ENCODE measurements at regions of chr1 and their contacts with region 1.

Region 1: DNA sequence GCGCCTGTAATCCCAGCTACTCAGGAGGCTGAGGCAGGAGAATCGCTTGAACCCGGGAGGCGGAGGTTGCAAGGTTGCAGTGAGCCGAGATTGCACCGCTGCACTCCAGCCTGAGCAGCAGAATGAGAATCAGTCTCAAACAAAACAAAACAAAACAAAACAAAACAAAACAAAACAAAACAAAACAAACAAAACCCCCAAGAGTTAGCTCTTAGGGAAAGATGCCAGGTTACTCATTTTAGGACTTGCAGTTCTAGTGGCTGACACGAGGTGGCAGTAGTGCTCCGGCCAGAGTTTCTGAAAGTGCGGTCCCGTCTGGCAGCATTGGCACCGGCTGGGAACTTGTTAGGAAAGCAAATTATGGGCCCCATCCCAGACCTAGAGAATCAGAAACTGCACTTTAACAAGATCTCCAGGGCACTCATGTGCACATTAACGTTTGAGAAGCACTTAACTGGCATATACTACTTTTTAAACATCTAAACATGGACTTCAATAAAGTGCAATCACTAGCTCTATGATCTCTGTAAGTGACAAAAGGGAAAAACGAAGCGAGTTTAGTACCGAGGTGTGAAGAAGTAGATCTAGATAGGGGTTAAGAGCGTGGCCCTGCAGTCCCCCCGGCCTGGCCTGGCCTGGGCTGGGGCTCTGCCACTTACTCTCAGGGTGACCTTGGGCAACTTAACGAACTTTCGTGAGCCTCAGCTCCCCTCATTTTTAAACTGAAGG is 41.9 kb upstream of the TNFRSF1B start:
- DNase-seq: peak; percentile 41 to 91
- H3K4me3 ChIP-seq: no peak overlapping the region
- H3K27ac ChIP-seq: no peak overlapping the region
- H3K4me1 ChIP-seq: no peaks in the 10 kb centered on the region
- H3K27me3 ChIP-seq: no peaks in the 10 kb centered on the region
- CTCF ChIP-seq: peak; percentile 78 to 97 (median 89)
- EP300 ChIP-seq: no peak
- POLR2A ChIP-seq: no peak
- RAD21 ChIP-seq: peak; percentile 96 to 97

Region 2: DNA sequence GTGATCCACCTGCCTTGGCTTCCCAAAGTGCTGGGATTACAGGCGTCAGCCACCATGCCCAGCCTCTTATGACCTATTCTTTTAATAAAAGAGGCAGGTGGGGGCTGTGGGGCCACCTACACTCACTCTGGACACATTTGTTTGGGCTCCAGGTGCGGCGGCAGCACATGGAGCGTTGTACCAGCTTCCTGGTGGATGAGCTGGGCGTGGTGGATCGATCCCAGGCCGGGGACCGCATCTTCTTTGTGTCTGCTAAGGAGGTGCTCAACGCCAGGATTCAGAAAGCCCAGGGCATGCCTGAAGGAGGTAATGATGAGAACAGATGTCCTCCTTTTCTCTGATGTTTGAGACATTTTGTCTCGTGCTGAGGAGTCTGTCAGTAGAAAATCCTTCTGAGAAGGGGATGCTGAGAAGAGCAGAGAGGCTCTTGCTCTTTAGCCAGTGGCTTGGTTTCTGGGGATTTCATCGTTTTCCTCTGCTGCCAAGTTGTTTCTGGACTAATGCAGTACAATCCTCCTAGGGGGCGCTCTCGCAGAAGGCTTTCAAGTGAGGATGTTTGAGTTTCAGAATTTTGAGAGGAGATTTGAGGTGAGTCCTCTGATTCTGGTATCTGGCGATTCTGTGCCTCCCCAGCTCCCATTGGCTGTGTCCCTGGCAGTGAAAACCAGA is 123.5 kb before region 1 on chr1:
- CTCF ChIA-PET with region 1: no interaction called
- POLR2A ChIA-PET with region 1: no interaction called
- DNase-seq: peak in 1 of 2 experiments; percentile 83
- H3K4me3 ChIP-seq: no peak overlapping the region
- H3K27ac ChIP-seq: no peak overlapping the region
- H3K4me1 ChIP-seq: no peaks in the 10 kb centered on the region
- H3K27me3 ChIP-seq: no peaks in the 10 kb centered on the region
- CTCF ChIP-seq: peak; percentile 30 to 79 (median 74)
- EP300 ChIP-seq: no peak
- POLR2A ChIP-seq: no peak
- RAD21 ChIP-seq: peak; percentile 51 to 64

Region 3: GRCh38 chr1:12113433-12114339 is 11.2 kb before region 1 on chr1:
- CTCF ChIA-PET with region 1: interaction called, 61 read pairs
- POLR2A ChIA-PET with region 1: no interaction called
- DNase-seq: no peak
- H3K4me3 ChIP-seq: no peak overlapping the region
- H3K27ac ChIP-seq: no peak overlapping the region
- H3K4me1 ChIP-seq: no peaks in the 10 kb centered on the region
- H3K27me3 ChIP-seq: no peaks in the 10 kb centered on the region
- CTCF ChIP-seq: no peak
- EP300 ChIP-seq: no peak
- POLR2A ChIP-seq: no peak
- RAD21 ChIP-seq: no peak

Region 4: GRCh38 chr1:12153181-12153785 is 28.4 kb after region 1 on chr1:
- CTCF ChIA-PET with region 1: interaction called, 79 read pairs
- POLR2A ChIA-PET with region 1: no interaction called
- DNase-seq: no peak
- H3K4me3 ChIP-seq: no peak overlapping the region
- H3K27ac ChIP-seq: no peak overlapping the region
- H3K4me1 ChIP-seq: 0 out of 7 replicates have a peak, but pooled peaks cover 0 to 2% (median 0%) of the 10 kb centered on the region in 4 experiments
- H3K27me3 ChIP-seq: peaks cover 0 to 2% (median 0%) of the 10 kb centered on the region in 4 experiments; a peak in 1 of 7 replicates
- CTCF ChIP-seq: no peak
- EP300 ChIP-seq: no peak
- POLR2A ChIP-seq: no peak
- RAD21 ChIP-seq: no peak

Region 5: GRCh38 chr1:12177999-12178441 is 53.2 kb after region 1 on chr1:
- CTCF ChIA-PET with region 1: interaction called, 61 read pairs
- POLR2A ChIA-PET with region 1: no interaction called
- DNase-seq: no peak
- H3K4me3 ChIP-seq: no peak overlapping the region
- H3K27ac ChIP-seq: no peak overlapping the region
- H3K4me1 ChIP-seq: peaks cover 0 to 19% (median 2%) of the 10 kb centered on the region in 4 experiments; a peak in 3 of 7 replicates
- H3K27me3 ChIP-seq: no peaks in the 10 kb centered on the region
- CTCF ChIP-seq: no peak
- EP300 ChIP-seq: no peak
- POLR2A ChIP-seq: no peak
- RAD21 ChIP-seq: no peak

Region 6: GRCh38 chr1:12215118-12215961 is 90.5 kb after region 1 on chr1:
- CTCF ChIA-PET with region 1: interaction called, 503 read pairs
- POLR2A ChIA-PET with region 1: no interaction called
- DNase-seq: no peak
- H3K4me3 ChIP-seq: no peak overlapping the region
- H3K27ac ChIP-seq: no peak overlapping the region
- H3K4me1 ChIP-seq: no peaks in the 10 kb centered on the region
- H3K27me3 ChIP-seq: no peaks in the 10 kb centered on the region; a peak in 1 of 7 replicates
- CTCF ChIP-seq: no peak
- EP300 ChIP-seq: no peak
- POLR2A ChIP-seq: no peak
- RAD21 ChIP-seq: no peak

Region 7: GRCh38 chr1:12275369-12275768 is 150.5 kb after region 1 on chr1:
- CTCF ChIA-PET with region 1: interaction called, 58 read pairs
- POLR2A ChIA-PET with region 1: no interaction called
- DNase-seq: peak; percentile 5 to 75
- H3K4me3 ChIP-seq: no peak overlapping the region
- H3K27ac ChIP-seq: no peak overlapping the region
- H3K4me1 ChIP-seq: peaks cover 0 to 5% (median 0%) of the 10 kb centered on the region in 4 experiments; a peak in 1 of 7 replicates
- H3K27me3 ChIP-seq: no peaks in the 10 kb centered on the region
- CTCF ChIP-seq: peak; percentile 68 to 91 (median 81)
- EP300 ChIP-seq: no peak
- POLR2A ChIP-seq: no peak
- RAD21 ChIP-seq: peak; percentile 39